ENCODE measurements at regions of chr5 and their contacts with region 1.

Region 1: DNA sequence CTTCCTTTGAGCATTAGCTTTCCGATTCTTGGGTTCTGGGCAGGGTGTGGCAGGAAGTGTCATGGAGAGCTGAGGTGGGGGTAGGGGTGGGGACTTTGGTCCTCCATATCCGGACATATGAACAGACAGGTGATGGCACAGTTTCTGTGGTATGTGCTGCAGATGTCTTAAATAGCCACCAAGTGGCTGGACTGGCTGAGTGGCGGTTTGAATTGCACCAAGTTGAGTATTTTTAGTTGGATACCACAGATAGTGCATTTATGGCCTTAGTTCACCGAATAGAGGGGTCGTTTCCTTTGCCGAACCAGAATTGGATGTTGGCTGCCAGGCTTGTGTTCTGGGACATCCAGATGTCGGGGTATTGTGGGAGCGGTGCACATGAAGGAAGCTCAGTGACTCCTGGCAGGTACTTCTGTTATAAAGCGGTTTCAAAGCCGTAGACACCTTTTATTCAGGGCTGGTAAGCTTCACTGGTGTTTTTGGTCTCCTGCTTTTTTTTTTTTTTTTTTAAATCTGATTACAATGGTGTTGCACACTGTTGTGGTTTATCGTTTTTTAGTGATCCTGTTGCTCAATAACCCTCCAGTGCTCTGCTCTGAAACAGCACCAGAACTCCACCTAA is 15.1 kb upstream of the TNFAIP8 start:
- DNase-seq: peak in 12 of 14 experiments; percentile 44 to 91 (median 62)
- ATAC-seq: peak; percentile 55
- H3K4me3 ChIP-seq: peak overlapping the region; percentile 49
- H3K4me3 Mint-ChIP-seq: peak overlapping the region; percentile 81
- H3K27ac ChIP-seq: peak overlapping the region; percentile 77 to 83
- H3K27ac Mint-ChIP-seq: peak overlapping the region; percentile 97
- H3K4me1 ChIP-seq: peaks cover 93% of the 10 kb centered on the region
- H3K4me1 Mint-ChIP-seq: peaks cover 97% of the 10 kb centered on the region
- H3K27me3 ChIP-seq: no peaks in the 10 kb centered on the region
- H3K27me3 Mint-ChIP-seq: no peaks in the 10 kb centered on the region
- CTCF ChIP-seq: no peak

Region 2: GRCh38 chr5:119267958-119268386 is 72.7 kb before region 1 on chr5:
- CTCF ChIA-PET with region 1: interaction called, 6 read pairs
- POLR2A ChIA-PET with region 1: interaction called, 84 read pairs
- intact Hi-C with region 1: loop called in 1 of 2 experiments (anchors 5 kb)
- DNase-seq: peak; percentile 59 to 93 (median 74)
- ATAC-seq: peak; percentile 76
- H3K4me3 ChIP-seq: peak overlapping the region; percentile 69
- H3K4me3 Mint-ChIP-seq: peak overlapping the region; percentile 99
- H3K27ac ChIP-seq: peak overlapping the region; percentile 89 to 92
- H3K27ac Mint-ChIP-seq: peak overlapping the region; percentile 97
- H3K4me1 ChIP-seq: peaks cover 27% of the 10 kb centered on the region
- H3K4me1 Mint-ChIP-seq: peaks cover 76% of the 10 kb centered on the region
- H3K27me3 ChIP-seq: no peaks in the 10 kb centered on the region
- H3K27me3 Mint-ChIP-seq: no peaks in the 10 kb centered on the region
- CTCF ChIP-seq: peak; percentile 70

Region 3: DNA sequence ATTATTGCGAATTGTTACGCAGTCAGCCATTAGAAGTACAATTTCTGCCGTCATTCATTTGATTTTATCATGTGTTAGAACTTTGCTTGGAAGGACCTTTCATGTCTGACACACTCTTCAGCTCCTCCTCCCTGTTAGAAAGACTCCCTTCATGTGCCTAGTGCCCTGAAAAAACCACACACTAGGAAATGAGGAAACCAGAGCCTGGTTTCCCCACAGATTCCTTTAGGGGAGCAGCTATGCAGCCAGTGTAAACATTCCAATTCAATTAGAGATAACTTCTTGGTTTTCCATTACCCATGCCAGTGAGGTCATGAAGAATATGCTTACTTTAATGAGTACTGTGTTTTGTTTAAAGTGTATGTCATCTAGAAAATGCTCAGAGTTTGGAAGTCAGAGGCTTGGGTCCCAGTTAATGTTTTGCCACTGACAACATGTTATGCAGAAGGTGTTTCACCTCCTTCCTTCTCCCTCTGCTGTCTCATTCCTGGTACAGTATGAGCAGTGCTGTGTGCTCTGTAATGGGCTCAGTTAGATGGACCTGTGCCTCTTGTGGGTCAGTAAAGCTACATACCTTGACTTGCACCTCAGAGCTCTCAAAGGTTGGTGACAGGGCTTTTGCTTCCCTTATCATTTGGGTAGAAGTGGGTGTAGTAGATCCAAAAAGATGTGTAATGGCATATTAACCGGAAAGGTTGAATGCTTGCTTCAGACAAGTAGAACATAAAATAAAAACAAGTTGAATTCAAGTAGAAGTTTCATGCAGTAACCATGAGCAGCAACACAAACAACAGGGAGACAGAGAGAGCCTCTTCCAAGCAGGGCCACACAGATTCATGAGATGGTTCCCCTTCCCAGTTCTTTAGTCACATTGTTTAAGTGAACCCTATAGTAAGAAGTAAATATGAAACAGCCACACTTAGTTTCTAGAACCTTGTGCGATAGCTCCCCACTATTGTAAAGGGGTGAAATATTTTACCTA is 37.5 kb before region 1 on chr5:
- CTCF ChIA-PET with region 1: interaction called, 6 read pairs
- POLR2A ChIA-PET with region 1: interaction called, 49 read pairs
- intact Hi-C with region 1: loop called in 1 of 2 experiments (anchors 5 kb)
- DNase-seq: peak in 2 of 14 experiments; percentile 56 to 58
- ATAC-seq: peak; percentile 76
- H3K4me3 ChIP-seq: no peak overlapping the region
- H3K4me3 Mint-ChIP-seq: peak overlapping the region; percentile 73
- H3K27ac ChIP-seq: peak overlapping the region; percentile 54 to 72
- H3K27ac Mint-ChIP-seq: peak overlapping the region; percentile 95
- H3K4me1 ChIP-seq: peaks cover 59% of the 10 kb centered on the region
- H3K4me1 Mint-ChIP-seq: peaks cover 96% of the 10 kb centered on the region
- H3K27me3 ChIP-seq: no peaks in the 10 kb centered on the region
- H3K27me3 Mint-ChIP-seq: no peaks in the 10 kb centered on the region
- CTCF ChIP-seq: no peak

Region 4: DNA sequence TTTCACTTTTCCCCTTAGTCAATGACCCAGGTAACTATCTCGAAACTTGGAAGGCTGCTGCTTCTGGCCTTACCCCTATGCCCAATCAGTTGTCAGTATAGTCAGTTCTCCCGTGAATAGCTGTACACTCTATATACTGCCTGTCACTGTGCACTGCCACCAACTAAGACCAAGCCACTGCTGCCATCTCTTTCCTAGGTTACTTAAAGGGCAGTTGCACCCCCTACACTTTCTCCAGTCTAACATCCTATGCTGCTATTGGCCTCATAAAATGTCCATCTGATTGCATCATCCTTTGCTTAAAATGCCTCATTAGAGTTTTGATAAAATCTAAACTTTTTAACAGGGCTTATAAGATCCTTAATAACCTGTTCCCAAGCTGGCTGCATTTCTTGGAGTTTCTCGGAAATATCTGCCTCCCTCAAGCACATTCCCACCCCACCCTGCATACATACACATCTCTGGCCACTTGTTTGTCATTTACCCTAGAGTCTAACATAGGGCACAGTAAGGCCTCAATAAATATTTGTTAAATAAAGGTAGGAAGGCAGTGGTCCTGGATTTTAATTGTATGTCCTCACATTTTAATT is 17.7 kb before region 1 on chr5:
- CTCF ChIA-PET with region 1: interaction called, 4 read pairs
- POLR2A ChIA-PET with region 1: interaction called, 20 read pairs
- intact Hi-C with region 1: loop called in 1 of 2 experiments (anchors 2 kb)
- DNase-seq: peak in 1 of 14 experiments; percentile 55
- ATAC-seq: no peak
- H3K4me3 ChIP-seq: no peak overlapping the region
- H3K4me3 Mint-ChIP-seq: peak overlapping the region; percentile 77
- H3K27ac ChIP-seq: peak overlapping the region; percentile 42 to 60
- H3K27ac Mint-ChIP-seq: peak overlapping the region; percentile 97
- H3K4me1 ChIP-seq: peaks cover 95% of the 10 kb centered on the region
- H3K4me1 Mint-ChIP-seq: peaks cover 96% of the 10 kb centered on the region
- H3K27me3 ChIP-seq: no peaks in the 10 kb centered on the region
- H3K27me3 Mint-ChIP-seq: no peaks in the 10 kb centered on the region
- CTCF ChIP-seq: no peak

Region 5: GRCh38 chr5:119360905-119361593 is 20.3 kb after region 1 on chr5:
- CTCF ChIA-PET with region 1: interaction called, 36 read pairs
- POLR2A ChIA-PET with region 1: interaction called, 301 read pairs
- intact Hi-C with region 1: no loop called
- DNase-seq: no peak
- ATAC-seq: no peak
- H3K4me3 ChIP-seq: no peak overlapping the region
- H3K4me3 Mint-ChIP-seq: peak overlapping the region; percentile 47
- H3K27ac ChIP-seq: peak overlapping the region; percentile 32 to 37
- H3K27ac Mint-ChIP-seq: peak overlapping the region; percentile 86
- H3K4me1 ChIP-seq: peaks cover 96% of the 10 kb centered on the region
- H3K4me1 Mint-ChIP-seq: peaks cover 97% of the 10 kb centered on the region
- H3K27me3 ChIP-seq: no peaks in the 10 kb centered on the region
- H3K27me3 Mint-ChIP-seq: no peaks in the 10 kb centered on the region
- CTCF ChIP-seq: no peak

Region 6: DNA sequence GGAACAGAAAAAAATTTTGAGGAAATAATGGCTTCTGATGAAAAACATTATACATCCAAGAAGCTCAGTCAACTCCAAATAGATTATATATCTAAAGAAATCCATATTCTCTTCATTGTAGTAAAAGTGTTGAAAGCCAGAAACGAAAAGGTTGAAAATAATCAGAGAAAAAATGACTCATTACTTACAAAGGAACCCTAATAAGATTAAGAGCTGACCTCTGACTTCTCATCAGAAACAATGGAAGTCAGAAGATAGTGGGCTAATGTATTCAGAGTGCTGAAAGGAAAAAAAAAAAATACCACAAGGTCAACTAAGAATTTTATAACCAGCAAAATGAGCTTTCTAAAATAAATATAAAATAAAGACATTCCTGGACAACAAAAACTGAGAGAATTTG is 171.6 kb after region 1 on chr5:
- CTCF ChIA-PET with region 1: no interaction called
- POLR2A ChIA-PET with region 1: no interaction called
- intact Hi-C with region 1: no loop called
- DNase-seq: no peak
- ATAC-seq: no peak
- H3K4me3 ChIP-seq: no peak overlapping the region
- H3K4me3 Mint-ChIP-seq: no peak overlapping the region
- H3K27ac ChIP-seq: no peak overlapping the region
- H3K27ac Mint-ChIP-seq: no peak overlapping the region
- H3K4me1 ChIP-seq: no peaks in the 10 kb centered on the region
- H3K4me1 Mint-ChIP-seq: no peaks in the 10 kb centered on the region
- H3K27me3 ChIP-seq: no peaks in the 10 kb centered on the region
- H3K27me3 Mint-ChIP-seq: no peaks in the 10 kb centered on the region
- CTCF ChIP-seq: no peak

Measured in CD4-positive, alpha-beta T cell (primary cell).